Sciatic nerve (tissue), 2 donors: ENCODE measurements at regions of chr11 and their contacts with region 1.

Region 1: DNA sequence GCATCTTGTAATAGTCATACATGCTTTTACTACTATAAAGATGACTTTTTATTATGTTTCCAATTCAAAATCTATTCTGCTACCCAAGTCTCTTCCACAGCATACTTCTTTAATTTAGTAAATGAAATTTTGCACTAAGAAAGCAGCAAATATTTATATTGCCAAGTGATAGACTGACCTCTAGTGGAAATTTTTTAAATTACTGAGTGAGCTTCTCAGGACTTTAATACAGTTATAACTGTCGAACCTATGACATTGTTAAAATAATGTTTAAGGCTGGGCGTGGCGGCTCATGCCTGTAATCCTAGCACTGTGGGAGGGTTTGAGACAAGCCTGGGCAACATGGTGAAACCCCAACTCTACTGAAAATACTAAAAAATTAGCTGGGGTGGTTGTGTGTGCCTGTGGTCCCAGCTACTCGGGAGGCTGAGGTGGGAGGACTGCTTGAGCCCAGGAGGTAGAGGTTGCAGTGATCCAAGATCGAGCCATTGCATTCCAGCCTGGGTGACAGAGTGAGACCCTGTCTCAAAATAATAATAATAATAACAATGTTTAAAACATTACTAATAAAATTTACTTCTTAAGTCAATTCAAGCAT is 27.3 kb downstream of the STK33 start:
- DNase-seq: no peak
- ATAC-seq: peak; percentile 42

Region 2: DNA sequence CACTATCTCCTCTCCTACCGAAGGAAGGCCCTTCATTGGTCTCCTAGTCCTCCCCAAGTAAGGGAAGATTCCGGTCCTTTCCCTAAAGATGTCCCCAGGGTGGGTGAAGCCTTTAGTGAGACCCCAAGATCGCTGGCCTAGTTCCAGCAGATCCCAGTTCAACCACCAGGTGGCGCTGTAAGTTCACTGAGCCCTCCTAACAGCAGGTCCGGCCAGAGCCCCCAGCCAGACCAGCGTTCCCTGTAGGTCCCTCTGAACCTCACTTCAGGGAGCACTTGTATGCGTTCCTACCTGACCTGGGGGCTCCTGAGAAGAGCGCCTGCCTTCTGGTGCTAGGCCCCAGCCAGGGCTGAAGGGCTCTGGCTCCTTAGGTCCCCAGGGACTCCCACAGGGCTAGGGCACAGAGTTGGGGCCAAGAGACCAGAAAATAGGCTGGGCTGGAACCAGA is 341.1 kb before region 1 on chr11:
- intact Hi-C with region 1: loop called (anchors 10 kb)
- DNase-seq: peak; percentile 87
- ATAC-seq: peak; percentile 74

Region 3: GRCh38 chr11:8973121-8973520 is 406.4 kb after region 1 on chr11:
- intact Hi-C with region 1: no loop called
- DNase-seq: no peak
- ATAC-seq: no peak